ENCODE measurements at regions of chr6 and their contacts with region 1.

Region 1: DNA sequence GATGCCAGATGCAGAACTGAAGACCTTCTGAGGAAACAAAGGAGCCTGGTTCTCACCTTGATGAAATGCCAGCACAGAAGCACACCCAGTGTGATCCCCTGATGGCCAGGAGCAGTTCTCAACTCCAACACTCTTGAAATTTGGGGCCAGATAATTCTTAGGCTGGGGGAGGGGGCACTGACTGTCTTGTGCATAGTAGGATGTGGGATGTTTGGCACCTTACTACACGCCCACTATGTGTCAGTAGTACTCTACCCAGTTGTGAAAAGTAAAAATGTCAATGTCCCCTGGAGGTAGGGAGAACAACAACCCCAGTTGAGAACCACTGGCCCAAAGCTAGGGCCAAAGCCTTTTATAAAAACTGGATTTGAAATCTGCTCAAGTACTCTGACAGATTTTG is 398.3 kb upstream of the ARID1B start:
- DNase-seq: peak in 2 of 9 experiments; percentile 23 to 45
- ATAC-seq: peak; percentile 48
- H3K4me3 ChIP-seq: no peak overlapping the region
- H3K4me3 Mint-ChIP-seq: no peak overlapping the region
- H3K27ac ChIP-seq: no peak overlapping the region
- H3K27ac Mint-ChIP-seq: no peak overlapping the region
- H3K4me1 ChIP-seq: no peaks in the 10 kb centered on the region
- H3K4me1 Mint-ChIP-seq: no peaks in the 10 kb centered on the region
- H3K27me3 ChIP-seq: no peaks in the 10 kb centered on the region
- H3K27me3 Mint-ChIP-seq: no peaks in the 10 kb centered on the region
- CTCF ChIP-seq: no peak

Region 2: GRCh38 chr6:156359912-156360311 is 18.9 kb before region 1 on chr6:
- CTCF ChIA-PET with region 1: no interaction called
- POLR2A ChIA-PET with region 1: no interaction called
- intact Hi-C with region 1: loop called in 1 of 2 experiments (anchors 2 kb)
- DNase-seq: no peak
- ATAC-seq: no peak
- H3K4me3 ChIP-seq: no peak overlapping the region
- H3K4me3 Mint-ChIP-seq: no peak overlapping the region
- H3K27ac ChIP-seq: no peak overlapping the region
- H3K27ac Mint-ChIP-seq: no peak overlapping the region
- H3K4me1 ChIP-seq: no peaks in the 10 kb centered on the region
- H3K4me1 Mint-ChIP-seq: no peaks in the 10 kb centered on the region
- H3K27me3 ChIP-seq: no peaks in the 10 kb centered on the region
- H3K27me3 Mint-ChIP-seq: peaks cover 4% of the 10 kb centered on the region
- CTCF ChIP-seq: no peak

Measured in CD8-positive, alpha-beta T cell (primary cell).